ENCODE measurements at regions of chr20 and their contacts with region 1.

Region 1: GRCh38 chr20:13261460-13262301 is 40.6 kb downstream of the ISM1 start:
- DNase-seq: peak; percentile 32 to 73 (median 62)
- ATAC-seq: peak; percentile 89
- H3K4me3 ChIP-seq: no peak overlapping the region
- H3K4me3 Mint-ChIP-seq: no peak overlapping the region
- H3K27ac ChIP-seq: no peak overlapping the region
- H3K27ac Mint-ChIP-seq: peak overlapping the region in 6 of 9 donors; percentile 21 to 51 (median 34)
- H3K4me1 ChIP-seq: peaks cover 0 to 6% of the 10 kb centered on the region in 2 donors
- H3K4me1 Mint-ChIP-seq: peaks cover 11 to 44% (median 27%) of the 10 kb centered on the region in 7 donors
- H3K27me3 ChIP-seq: no peaks in the 10 kb centered on the region
- H3K27me3 Mint-ChIP-seq: no peaks in the 10 kb centered on the region

Region 2: DNA sequence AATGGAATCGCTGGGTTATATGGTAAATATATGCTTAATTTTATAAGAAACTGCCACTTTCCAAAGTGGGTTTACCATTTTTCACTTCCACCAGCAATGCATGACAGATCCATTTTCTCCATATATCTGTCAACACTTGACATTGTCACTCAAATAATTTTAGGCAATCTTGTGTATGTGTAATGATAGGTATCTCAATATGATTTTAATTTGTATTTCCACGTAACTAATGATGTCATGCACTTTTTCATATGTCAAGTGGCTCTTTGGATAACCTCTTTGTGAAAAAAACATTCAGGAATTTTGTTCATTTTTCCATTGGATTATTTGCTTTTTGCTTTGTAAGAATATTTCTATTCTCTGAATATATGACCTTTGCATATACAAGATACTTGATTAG is 924.1 kb before region 1 on chr20:
- CTCF ChIA-PET with region 1: no interaction called
- POLR2A ChIA-PET with region 1: no interaction called
- intact Hi-C with region 1: no loop called
- DNase-seq: no peak
- ATAC-seq: no peak
- H3K4me3 ChIP-seq: no peak overlapping the region
- H3K4me3 Mint-ChIP-seq: no peak overlapping the region
- H3K27ac ChIP-seq: no peak overlapping the region
- H3K27ac Mint-ChIP-seq: no peak overlapping the region
- H3K4me1 ChIP-seq: no peaks in the 10 kb centered on the region
- H3K4me1 Mint-ChIP-seq: peaks cover 0 to 2% (median 0%) of the 10 kb centered on the region in 7 donors
- H3K27me3 ChIP-seq: no peaks in the 10 kb centered on the region
- H3K27me3 Mint-ChIP-seq: no peaks in the 10 kb centered on the region

Region 3: GRCh38 chr20:13139459-13140150 is 122.1 kb before region 1 on chr20:
- CTCF ChIA-PET with region 1: no interaction called
- POLR2A ChIA-PET with region 1: no interaction called
- intact Hi-C with region 1: loop called in 1 of 2 experiments (anchors 5 kb)
- DNase-seq: no peak
- ATAC-seq: no peak
- H3K4me3 ChIP-seq: no peak overlapping the region
- H3K4me3 Mint-ChIP-seq: no peak overlapping the region
- H3K27ac ChIP-seq: no peak overlapping the region
- H3K27ac Mint-ChIP-seq: no peak overlapping the region
- H3K4me1 ChIP-seq: no peaks in the 10 kb centered on the region
- H3K4me1 Mint-ChIP-seq: peaks cover 0 to 14% (median 3%) of the 10 kb centered on the region in 7 donors
- H3K27me3 ChIP-seq: no peaks in the 10 kb centered on the region
- H3K27me3 Mint-ChIP-seq: peaks cover 0 to 4% (median 0%) of the 10 kb centered on the region in 5 donors

Region 4: DNA sequence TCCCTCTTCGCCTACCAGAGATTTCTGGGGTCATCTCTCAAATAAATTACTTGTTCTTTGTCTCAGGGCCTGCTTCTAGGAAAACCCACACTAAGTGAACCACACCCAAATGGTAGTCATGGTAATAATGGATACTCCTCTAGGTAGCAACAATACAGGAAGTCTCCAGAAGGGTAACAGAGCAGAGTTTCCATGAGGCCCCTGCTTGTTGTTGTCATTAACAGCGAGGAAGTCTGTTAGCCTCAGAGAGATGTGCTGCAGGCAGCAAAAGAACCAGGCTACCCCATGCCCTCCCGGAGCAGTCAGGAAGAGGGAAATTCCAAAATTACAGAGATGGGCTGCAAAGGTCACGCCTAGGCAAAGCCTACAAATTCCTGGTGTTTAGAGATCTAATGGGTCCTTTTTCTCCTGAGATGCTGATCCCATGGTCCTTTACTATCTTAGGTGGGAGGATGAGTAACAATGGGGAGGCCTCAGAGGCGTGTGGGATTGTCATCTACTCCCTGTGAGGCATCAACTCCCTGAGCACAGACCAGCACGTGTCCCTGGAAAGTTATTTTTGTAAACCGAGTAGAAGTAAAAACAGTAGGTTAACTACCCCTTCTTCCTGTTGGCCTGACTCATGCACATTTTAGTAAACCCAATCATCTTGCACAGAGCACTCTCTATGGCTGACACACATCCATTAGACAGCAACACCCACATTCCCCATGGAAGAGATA is 30.5 kb before region 1 on chr20:
- CTCF ChIA-PET with region 1: interaction called, 3 read pairs
- POLR2A ChIA-PET with region 1: interaction called, 3 read pairs
- intact Hi-C with region 1: loop called (anchors 1 kb)
- DNase-seq: peak in 8 of 9 donors; percentile 46 to 87 (median 80)
- ATAC-seq: peak; percentile 97
- H3K4me3 ChIP-seq: peak overlapping the region; percentile 28
- H3K4me3 Mint-ChIP-seq: peak overlapping the region; percentile 26 to 88 (median 69)
- H3K27ac ChIP-seq: peak overlapping the region; percentile 77
- H3K27ac Mint-ChIP-seq: peak overlapping the region; percentile 92 to 98 (median 96)
- H3K4me1 ChIP-seq: peaks cover 23 to 39% of the 10 kb centered on the region in 2 donors
- H3K4me1 Mint-ChIP-seq: peaks cover 27 to 50% (median 44%) of the 10 kb centered on the region in 7 donors
- H3K27me3 ChIP-seq: no peaks in the 10 kb centered on the region
- H3K27me3 Mint-ChIP-seq: peaks cover 0 to 8% (median 0%) of the 10 kb centered on the region in 5 donors

Region 5: GRCh38 chr20:13251106-13251903 is 10.4 kb before region 1 on chr20:
- CTCF ChIA-PET with region 1: interaction called, 10 read pairs
- POLR2A ChIA-PET with region 1: interaction called, 4 read pairs
- intact Hi-C with region 1: loop called (anchors 1 kb)
- DNase-seq: no peak
- ATAC-seq: no peak
- H3K4me3 ChIP-seq: no peak overlapping the region
- H3K4me3 Mint-ChIP-seq: peak overlapping the region in 2 of 10 donors; percentile 25 to 36
- H3K27ac ChIP-seq: no peak overlapping the region
- H3K27ac Mint-ChIP-seq: peak overlapping the region in 8 of 9 donors; percentile 4 to 97 (median 70)
- H3K4me1 ChIP-seq: peaks cover 25 to 49% of the 10 kb centered on the region in 2 donors
- H3K4me1 Mint-ChIP-seq: peaks cover 24 to 82% (median 58%) of the 10 kb centered on the region in 7 donors
- H3K27me3 ChIP-seq: no peaks in the 10 kb centered on the region
- H3K27me3 Mint-ChIP-seq: no peaks in the 10 kb centered on the region

Region 6: DNA sequence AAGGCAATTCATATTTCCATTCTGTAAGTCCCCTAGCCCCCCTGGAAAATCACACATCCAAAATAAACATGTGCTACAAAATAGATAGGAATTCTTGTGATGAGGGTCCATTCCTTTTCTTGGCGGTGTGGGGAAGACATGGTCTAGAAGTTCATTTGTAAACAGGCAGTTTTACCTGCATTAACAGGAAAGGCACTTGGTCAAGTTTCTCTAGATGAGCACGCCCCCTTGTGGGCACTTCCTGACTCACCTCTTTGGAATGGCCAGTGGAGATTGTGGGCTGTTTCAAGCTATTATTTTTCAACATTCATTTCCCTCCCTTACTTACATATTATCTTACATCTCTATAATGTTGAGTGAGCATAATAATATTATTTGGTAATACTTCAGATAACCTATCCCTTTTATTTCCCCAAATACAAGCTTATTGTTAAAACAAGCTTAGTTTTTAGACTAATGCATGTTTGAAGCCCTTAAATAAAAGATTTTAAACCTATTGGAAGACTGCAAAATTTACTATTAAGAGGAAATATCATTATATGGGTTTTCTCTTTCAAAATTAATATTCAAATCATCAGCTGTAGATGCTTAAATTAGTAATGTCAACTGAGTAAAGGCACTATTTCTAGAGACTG is 284.9 kb after region 1 on chr20:
- CTCF ChIA-PET with region 1: no interaction called
- POLR2A ChIA-PET with region 1: no interaction called
- intact Hi-C with region 1: loop called in 1 of 2 experiments (anchors 1 kb)
- DNase-seq: peak; percentile 10 to 72 (median 44)
- ATAC-seq: peak; percentile 64
- H3K4me3 ChIP-seq: no peak overlapping the region
- H3K4me3 Mint-ChIP-seq: no peak overlapping the region
- H3K27ac ChIP-seq: no peak overlapping the region
- H3K27ac Mint-ChIP-seq: no peak overlapping the region
- H3K4me1 ChIP-seq: no peaks in the 10 kb centered on the region
- H3K4me1 Mint-ChIP-seq: peaks cover 0 to 4% (median 0%) of the 10 kb centered on the region in 7 donors
- H3K27me3 ChIP-seq: no peaks in the 10 kb centered on the region
- H3K27me3 Mint-ChIP-seq: no peaks in the 10 kb centered on the region

Region 7: DNA sequence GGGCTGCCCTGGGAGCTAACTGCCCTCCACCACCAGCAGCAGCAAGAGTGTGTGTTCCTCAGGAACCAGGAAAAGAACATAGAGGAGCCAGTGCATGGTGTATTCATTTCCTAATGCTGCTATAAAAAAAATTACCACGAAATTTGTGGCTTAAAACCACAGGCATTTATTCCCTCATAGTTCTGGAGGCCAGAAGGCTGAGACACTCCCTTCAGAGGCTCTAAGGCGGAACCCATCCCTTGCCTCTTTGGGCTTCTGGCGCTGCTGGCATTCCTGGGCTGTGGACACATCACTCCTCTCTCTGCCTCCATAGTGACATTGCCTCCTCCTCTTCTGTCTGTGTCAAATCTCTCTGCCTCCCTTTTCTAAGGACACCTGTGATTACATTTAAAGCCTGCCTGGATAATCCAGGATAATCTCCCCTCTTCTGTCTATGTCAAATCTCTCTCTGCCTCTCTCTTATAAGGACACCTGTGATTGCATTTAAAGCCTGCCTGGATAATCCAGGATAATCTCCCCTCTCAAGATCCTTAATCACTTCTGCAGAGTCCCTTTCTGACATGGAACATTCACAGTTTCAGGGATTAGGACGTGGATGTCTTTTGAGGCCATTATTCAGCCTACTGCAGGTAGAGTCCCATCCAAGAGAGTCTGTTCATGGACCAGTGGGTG is 577.9 kb after region 1 on chr20:
- CTCF ChIA-PET with region 1: no interaction called
- POLR2A ChIA-PET with region 1: no interaction called
- intact Hi-C with region 1: no loop called
- DNase-seq: no peak
- ATAC-seq: no peak
- H3K4me3 ChIP-seq: no peak overlapping the region
- H3K4me3 Mint-ChIP-seq: no peak overlapping the region
- H3K27ac ChIP-seq: no peak overlapping the region
- H3K27ac Mint-ChIP-seq: no peak overlapping the region
- H3K4me1 ChIP-seq: no peaks in the 10 kb centered on the region
- H3K4me1 Mint-ChIP-seq: no peaks in the 10 kb centered on the region
- H3K27me3 ChIP-seq: no peaks in the 10 kb centered on the region
- H3K27me3 Mint-ChIP-seq: peaks cover 2 to 34% (median 14%) of the 10 kb centered on the region in 5 donors

Measured in naive thymus-derived CD4-positive, alpha-beta T cell (primary cell).